ENCODE measurements at regions of chr1 and their contacts with region 1.

Region 1: GRCh38 chr1:209576798-209577197 is 6.7 kb upstream of the CAMK1G start:
- DNase-seq: peak; percentile 43
- H3K4me3 Mint-ChIP-seq: no peak overlapping the region
- H3K27ac Mint-ChIP-seq: no peak overlapping the region
- H3K4me1 Mint-ChIP-seq: peaks cover 2% of the 10 kb centered on the region
- H3K27me3 Mint-ChIP-seq: peaks cover 23% of the 10 kb centered on the region

Region 2: GRCh38 chr1:209627732-209628196 is 51.0 kb after region 1 on chr1:
- intact Hi-C with region 1: loop called (anchors 2 kb)
- DNase-seq: peak; percentile 63
- H3K4me3 Mint-ChIP-seq: no peak overlapping the region
- H3K27ac Mint-ChIP-seq: no peak overlapping the region
- H3K4me1 Mint-ChIP-seq: peaks cover 4% of the 10 kb centered on the region
- H3K27me3 Mint-ChIP-seq: peaks cover 2% of the 10 kb centered on the region

Region 3: DNA sequence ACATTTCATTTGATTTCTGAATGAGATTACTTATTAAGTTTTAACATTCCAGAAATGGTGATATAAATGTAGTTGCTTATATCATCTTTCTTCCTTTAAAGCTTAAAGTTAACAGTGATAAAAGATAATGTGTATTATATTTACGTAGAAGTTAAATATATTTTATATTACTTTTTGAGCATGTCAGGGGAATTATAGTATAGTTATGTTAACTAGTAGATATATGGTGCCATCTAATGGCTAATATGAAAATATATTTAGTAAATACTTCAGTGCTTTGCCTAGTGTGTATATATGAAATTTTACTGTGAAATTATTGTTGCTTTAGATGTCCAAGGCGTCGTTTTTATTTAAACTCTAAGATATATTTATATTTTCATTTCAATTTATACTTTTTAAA is 412.7 kb after region 1 on chr1:
- intact Hi-C with region 1: loop called (anchors 10 kb)
- DNase-seq: no peak
- H3K4me3 Mint-ChIP-seq: no peak overlapping the region
- H3K27ac Mint-ChIP-seq: no peak overlapping the region
- H3K4me1 Mint-ChIP-seq: no peaks in the 10 kb centered on the region
- H3K27me3 Mint-ChIP-seq: peaks cover 12% of the 10 kb centered on the region

Region 4: GRCh38 chr1:210132582-210132981 is 555.8 kb after region 1 on chr1:
- intact Hi-C with region 1: no loop called
- DNase-seq: no peak
- H3K4me3 Mint-ChIP-seq: no peak overlapping the region
- H3K27ac Mint-ChIP-seq: no peak overlapping the region
- H3K4me1 Mint-ChIP-seq: no peaks in the 10 kb centered on the region
- H3K27me3 Mint-ChIP-seq: no peaks in the 10 kb centered on the region

Measured in activated T-helper 2 cell treated with anti-CD3 and anti-CD28 coated beads, Interferon-gamma antibody, Interleukin-2, Interleukin-4, amounts not matched to agents 10 μg/mL and 5 μg/mL and 100 μg/mL, durations not matched to agents 14 hours and 24 hours and 36 hours (primary cell).